Activated CD8-positive, alpha-beta T cell treated with anti-CD3 and anti-CD28 coated beads for 36 hours (primary cell): ENCODE measurements at regions of chr17 and their contacts with region 1.

Region 1: DNA sequence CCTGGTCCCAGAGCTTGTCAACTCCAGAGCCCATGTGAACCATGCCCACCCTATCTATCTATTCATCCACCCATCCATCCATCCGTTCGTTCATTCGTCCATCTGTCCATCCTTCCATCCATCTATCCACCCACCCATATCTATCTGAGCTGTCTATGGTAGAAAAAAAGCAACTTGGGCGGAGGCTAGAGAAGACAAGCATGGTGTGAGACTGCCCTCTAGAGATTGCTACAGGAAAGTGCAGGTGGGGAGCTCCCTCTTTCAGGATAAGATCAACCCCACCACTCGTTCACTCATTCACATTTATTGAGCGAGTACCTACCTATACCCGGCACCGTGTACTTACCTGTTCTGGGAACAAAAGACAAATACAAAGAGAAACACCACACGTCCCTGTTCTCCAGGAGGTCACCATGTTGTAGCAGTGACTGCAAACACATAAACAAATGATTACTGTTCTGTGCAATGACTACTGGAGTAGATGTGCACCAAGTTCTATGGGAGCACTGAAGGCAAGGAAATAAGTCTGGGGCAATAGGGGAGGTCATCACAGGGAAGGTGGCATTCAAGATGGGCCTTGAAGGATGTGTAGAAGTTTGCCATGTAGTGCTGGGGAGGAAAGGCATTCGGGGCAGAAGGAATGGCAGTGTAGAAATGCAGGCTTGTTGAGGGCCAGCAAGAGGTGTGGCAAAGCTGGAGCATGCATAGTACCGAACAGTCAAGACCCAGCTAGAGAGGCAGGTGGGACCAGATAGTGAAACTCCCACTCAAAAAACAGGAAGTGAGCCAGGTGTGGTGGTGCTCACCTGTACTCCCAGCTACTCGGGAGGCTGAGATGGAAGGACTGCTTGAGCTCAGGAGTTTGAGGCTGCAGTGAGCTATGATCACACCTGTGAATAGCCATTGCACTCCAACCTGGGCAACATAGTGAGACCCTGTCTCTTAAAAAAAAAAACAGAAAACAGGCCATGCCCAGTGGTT is 13.4 kb upstream of the ATP5MC1 start:
- DNase-seq: peak; percentile 69
- ATAC-seq: peak; percentile 98
- H3K4me3 Mint-ChIP-seq: no peak overlapping the region
- H3K27ac Mint-ChIP-seq: no peak overlapping the region
- H3K4me1 Mint-ChIP-seq: no peaks in the 10 kb centered on the region
- H3K27me3 Mint-ChIP-seq: peaks cover 3% of the 10 kb centered on the region
- CTCF ChIP-seq: peak; percentile 94

Region 2: DNA sequence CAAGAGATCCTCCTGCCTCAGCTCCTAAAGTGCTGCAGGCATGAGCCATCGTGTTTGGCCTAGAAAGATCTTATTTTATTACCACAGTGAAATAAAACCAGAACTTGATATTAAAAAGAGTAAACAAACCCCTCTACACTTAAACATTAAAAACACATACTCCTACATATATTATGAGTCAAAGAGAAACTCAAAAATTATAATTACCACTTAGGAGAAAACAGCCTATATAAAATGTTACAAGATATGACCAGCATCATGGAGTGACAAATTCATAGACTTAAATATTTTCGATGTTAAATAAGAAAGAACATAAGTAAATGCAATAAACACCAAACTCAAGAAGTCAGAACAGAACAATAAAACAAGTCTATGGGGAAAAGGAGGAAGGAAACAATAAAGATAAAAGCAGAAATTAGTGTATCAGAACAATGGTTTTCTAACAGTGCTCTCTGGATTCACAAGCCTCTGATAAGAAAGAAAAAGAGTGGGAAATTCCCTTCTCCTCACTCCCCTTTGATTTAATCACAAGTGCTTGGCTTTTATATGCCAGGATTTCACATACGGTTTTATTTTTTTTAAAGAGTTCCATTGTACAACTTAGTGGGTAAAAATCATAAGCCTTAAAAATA is 472.2 kb before region 1 on chr17:
- CTCF ChIA-PET with region 1: no interaction called
- POLR2A ChIA-PET with region 1: no interaction called
- intact Hi-C with region 1: no loop called
- DNase-seq: no peak
- ATAC-seq: peak; percentile 45
- H3K4me3 Mint-ChIP-seq: peak overlapping the region; percentile 18
- H3K27ac Mint-ChIP-seq: peak overlapping the region; percentile 90
- H3K4me1 Mint-ChIP-seq: peaks cover 55% of the 10 kb centered on the region
- H3K27me3 Mint-ChIP-seq: no peaks in the 10 kb centered on the region
- CTCF ChIP-seq: no peak

Region 3: GRCh38 chr17:48618256-48618897 is 260.8 kb before region 1 on chr17:
- CTCF ChIA-PET with region 1: no interaction called
- POLR2A ChIA-PET with region 1: no interaction called
- intact Hi-C with region 1: no loop called
- DNase-seq: peak; percentile 83
- ATAC-seq: peak; percentile 69
- H3K4me3 Mint-ChIP-seq: peak overlapping the region; percentile 46
- H3K27ac Mint-ChIP-seq: no peak overlapping the region
- H3K4me1 Mint-ChIP-seq: peaks cover 32% of the 10 kb centered on the region
- H3K27me3 Mint-ChIP-seq: peaks cover 86% of the 10 kb centered on the region
- CTCF ChIP-seq: peak; percentile 99

Region 4: GRCh38 chr17:48718761-48719641 is 160.2 kb before region 1 on chr17:
- CTCF ChIA-PET with region 1: interaction called, 58 read pairs
- POLR2A ChIA-PET with region 1: no interaction called
- intact Hi-C with region 1: no loop called
- DNase-seq: no peak
- ATAC-seq: peak; percentile 27
- H3K4me3 Mint-ChIP-seq: peak overlapping the region; percentile 3
- H3K27ac Mint-ChIP-seq: no peak overlapping the region
- H3K4me1 Mint-ChIP-seq: peaks cover 22% of the 10 kb centered on the region
- H3K27me3 Mint-ChIP-seq: peaks cover 74% of the 10 kb centered on the region
- CTCF ChIP-seq: no peak

Region 5: GRCh38 chr17:48804925-48805411 is 74.2 kb before region 1 on chr17:
- CTCF ChIA-PET with region 1: interaction called, 614 read pairs
- POLR2A ChIA-PET with region 1: interaction called, 4 read pairs
- intact Hi-C with region 1: loop called (anchors 1 kb)
- DNase-seq: peak; percentile 75
- ATAC-seq: peak; percentile 100
- H3K4me3 Mint-ChIP-seq: no peak overlapping the region
- H3K27ac Mint-ChIP-seq: no peak overlapping the region
- H3K4me1 Mint-ChIP-seq: no peaks in the 10 kb centered on the region
- H3K27me3 Mint-ChIP-seq: peaks cover 6% of the 10 kb centered on the region
- CTCF ChIP-seq: peak; percentile 98

Region 6: DNA sequence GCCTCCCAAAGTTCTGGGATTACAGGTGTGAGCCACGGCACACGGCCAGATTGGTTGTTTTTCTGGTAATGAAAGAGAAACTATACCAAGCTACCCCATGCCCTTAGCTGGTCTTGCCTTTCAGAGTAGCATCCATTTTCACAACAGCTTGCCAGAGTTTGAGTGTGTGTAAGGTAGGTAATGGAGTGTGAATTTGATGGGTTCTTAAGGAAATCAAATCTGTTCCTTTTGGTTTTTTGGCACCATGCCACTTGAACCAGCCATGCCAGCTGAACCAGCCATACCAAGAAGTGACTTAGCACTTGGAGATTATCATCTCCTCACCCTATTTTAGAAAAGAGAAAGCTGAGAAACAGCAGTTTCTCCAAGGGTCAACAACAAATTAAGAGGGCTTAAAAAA is 43.2 kb before region 1 on chr17:
- CTCF ChIA-PET with region 1: interaction called, 42 read pairs
- POLR2A ChIA-PET with region 1: interaction called, 3 read pairs
- intact Hi-C with region 1: no loop called
- DNase-seq: peak; percentile 28
- ATAC-seq: no peak
- H3K4me3 Mint-ChIP-seq: no peak overlapping the region
- H3K27ac Mint-ChIP-seq: no peak overlapping the region
- H3K4me1 Mint-ChIP-seq: peaks cover 77% of the 10 kb centered on the region
- H3K27me3 Mint-ChIP-seq: no peaks in the 10 kb centered on the region
- CTCF ChIP-seq: no peak

Region 7: GRCh38 chr17:48860034-48860433 is 19.2 kb before region 1 on chr17:
- CTCF ChIA-PET with region 1: interaction called, 36 read pairs
- POLR2A ChIA-PET with region 1: no interaction called
- intact Hi-C with region 1: no loop called
- DNase-seq: no peak
- ATAC-seq: no peak
- H3K4me3 Mint-ChIP-seq: no peak overlapping the region
- H3K27ac Mint-ChIP-seq: no peak overlapping the region
- H3K4me1 Mint-ChIP-seq: peaks cover 2% of the 10 kb centered on the region
- H3K27me3 Mint-ChIP-seq: no peaks in the 10 kb centered on the region
- CTCF ChIP-seq: no peak

Region 8: DNA sequence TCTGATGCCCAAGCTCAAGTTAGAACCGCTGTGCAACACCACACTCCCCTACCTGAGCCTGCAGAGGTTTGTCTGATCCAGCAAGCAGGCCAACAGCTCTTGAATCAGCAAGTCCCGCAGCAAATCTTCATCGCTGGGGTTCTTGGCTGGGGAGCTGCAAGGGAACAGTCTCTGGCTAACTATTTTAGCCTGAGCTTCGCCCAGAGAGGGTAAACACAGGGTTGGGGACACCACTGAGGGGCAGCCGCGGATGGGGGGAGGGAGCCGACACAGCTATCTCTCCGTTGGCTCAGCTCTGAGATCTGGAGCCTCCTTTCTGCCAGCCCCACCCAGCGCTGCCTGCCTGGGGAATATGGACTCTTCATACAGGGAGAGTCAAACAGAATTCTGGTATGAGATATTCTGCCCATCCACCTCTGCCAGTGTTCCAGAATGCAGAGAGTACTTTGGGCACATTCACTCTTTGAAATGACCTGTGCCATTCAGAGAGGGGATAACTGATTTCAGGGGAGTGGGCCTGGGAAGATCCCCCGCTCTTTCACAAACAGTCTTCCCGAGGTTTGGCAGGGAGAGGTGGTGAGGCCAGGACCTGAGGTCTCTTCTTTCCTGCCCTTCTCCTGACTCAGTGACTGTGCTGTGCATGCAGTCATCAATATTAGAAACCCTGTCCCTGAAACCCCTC is 81.8 kb after region 1 on chr17:
- CTCF ChIA-PET with region 1: no interaction called
- POLR2A ChIA-PET with region 1: no interaction called
- intact Hi-C with region 1: no loop called
- DNase-seq: no peak
- ATAC-seq: no peak
- H3K4me3 Mint-ChIP-seq: no peak overlapping the region
- H3K27ac Mint-ChIP-seq: no peak overlapping the region
- H3K4me1 Mint-ChIP-seq: no peaks in the 10 kb centered on the region
- H3K27me3 Mint-ChIP-seq: peaks cover 32% of the 10 kb centered on the region
- CTCF ChIP-seq: no peak